ENCODE measurements at regions of chr11 and their contacts with region 1.

Region 1: DNA sequence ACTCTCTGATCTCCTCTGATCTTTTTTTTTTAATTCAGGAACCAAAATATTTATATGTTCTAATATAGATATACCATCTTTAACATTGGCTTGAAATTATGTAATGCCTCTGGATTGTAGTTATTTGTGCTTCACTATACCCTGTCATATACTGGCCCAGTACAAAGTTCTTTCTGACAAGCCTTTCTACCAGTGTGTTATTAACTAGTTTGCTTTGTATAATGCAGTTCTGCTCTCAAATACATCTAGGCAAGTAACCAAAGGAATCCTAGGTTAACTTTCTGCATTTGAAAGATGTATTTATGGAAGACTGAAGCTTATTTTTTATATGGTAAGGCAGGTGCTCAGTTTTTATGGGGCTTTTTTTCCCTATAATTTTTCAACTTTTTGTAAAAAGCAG is 36.1 kb downstream of the ARHGEF12 start:
- DNase-seq: no peak
- ATAC-seq: no peak
- H3K4me3 ChIP-seq: no peak overlapping the region
- H3K27ac ChIP-seq: no peak overlapping the region
- H3K4me1 ChIP-seq: peaks cover 48% of the 10 kb centered on the region
- H3K27me3 ChIP-seq: no peaks in the 10 kb centered on the region
- CTCF ChIP-seq: no peak

Region 2: DNA sequence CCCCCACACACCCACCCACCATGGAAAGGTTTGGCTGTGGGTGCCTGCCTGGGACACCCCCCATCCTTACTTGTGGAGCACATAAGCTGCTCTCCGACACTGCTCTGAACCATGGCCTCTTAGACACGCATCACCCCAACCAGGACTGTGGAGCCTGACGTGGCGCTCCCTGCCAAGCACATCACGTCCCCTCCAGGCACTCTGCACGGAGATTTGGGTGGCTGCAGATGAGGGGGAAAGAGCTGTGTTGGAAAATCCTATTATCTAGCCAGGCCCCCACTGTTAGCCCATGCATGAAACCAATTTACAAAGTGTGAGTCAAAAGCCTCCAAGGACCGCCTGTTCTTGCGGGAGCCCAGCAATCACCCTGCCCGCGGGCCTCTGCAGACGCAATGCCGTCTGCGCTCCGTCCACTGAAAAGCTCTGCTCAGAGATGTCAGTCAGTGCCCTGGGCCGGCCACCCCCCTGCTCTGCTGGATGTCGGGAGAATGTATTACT is 479.9 kb before region 1 on chr11:
- intact Hi-C with region 1: no loop called
- DNase-seq: no peak
- ATAC-seq: peak in 2 of 4 donors; percentile 17 to 42
- H3K4me3 ChIP-seq: no peak overlapping the region
- H3K27ac ChIP-seq: no peak overlapping the region
- H3K4me1 ChIP-seq: no peaks in the 10 kb centered on the region
- H3K27me3 ChIP-seq: peaks cover 0 to 11% (median 6%) of the 10 kb centered on the region in 3 donors
- CTCF ChIP-seq: no peak

Region 3: DNA sequence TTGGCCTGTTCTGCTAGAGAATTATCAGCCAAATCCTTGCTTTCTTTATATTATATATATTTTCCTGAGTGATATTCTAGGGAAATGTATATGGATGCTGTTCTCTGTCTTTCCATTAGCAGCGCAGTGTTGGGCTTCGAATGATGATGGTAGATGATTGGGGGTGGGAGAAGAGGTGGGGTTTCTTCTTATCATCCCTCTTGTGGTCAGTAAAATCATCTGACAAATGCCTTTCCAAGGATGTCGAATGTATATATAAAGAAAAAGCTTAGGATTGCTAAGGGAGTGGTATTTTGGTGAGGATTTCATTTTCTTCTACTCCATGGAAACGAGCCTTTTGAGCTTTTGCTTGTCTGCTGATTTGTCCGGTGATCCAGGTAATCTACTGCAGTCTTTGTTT is 12.8 kb after region 1 on chr11:
- intact Hi-C with region 1: loop called in 1 of 2 experiments (anchors 1 kb)
- DNase-seq: no peak
- ATAC-seq: no peak
- H3K4me3 ChIP-seq: no peak overlapping the region
- H3K27ac ChIP-seq: no peak overlapping the region
- H3K4me1 ChIP-seq: peaks cover 74% of the 10 kb centered on the region
- H3K27me3 ChIP-seq: no peaks in the 10 kb centered on the region
- CTCF ChIP-seq: no peak

Region 4: GRCh38 chr11:120413480-120413879 is 41.2 kb after region 1 on chr11:
- intact Hi-C with region 1: no loop called
- DNase-seq: no peak
- ATAC-seq: peak in 2 of 4 donors; percentile 43 to 45
- H3K4me3 ChIP-seq: no peak overlapping the region
- H3K27ac ChIP-seq: no peak overlapping the region
- H3K4me1 ChIP-seq: peaks cover 12% of the 10 kb centered on the region
- H3K27me3 ChIP-seq: no peaks in the 10 kb centered on the region
- CTCF ChIP-seq: no peak

Region 5: DNA sequence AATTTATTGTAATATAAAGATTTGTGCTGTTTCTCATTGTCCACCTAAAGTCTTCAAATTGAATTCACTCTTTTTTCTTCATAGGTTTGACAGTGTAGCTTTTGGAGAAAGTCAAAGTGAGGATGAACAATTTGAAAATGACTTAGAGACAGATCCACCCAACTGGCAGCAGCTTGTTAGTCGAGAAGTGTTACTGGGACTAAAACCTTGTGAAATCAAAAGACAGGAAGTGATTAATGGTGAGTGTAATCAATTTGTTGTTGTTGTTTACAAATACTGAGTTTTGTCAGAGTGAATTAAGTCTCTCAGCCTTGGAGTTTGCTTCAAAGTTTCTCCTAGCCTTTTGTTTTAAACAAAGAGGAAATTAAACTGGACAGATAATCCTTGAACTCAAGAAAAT is 85.7 kb after region 1 on chr11:
- intact Hi-C with region 1: no loop called
- DNase-seq: no peak
- ATAC-seq: no peak
- H3K4me3 ChIP-seq: no peak overlapping the region
- H3K27ac ChIP-seq: no peak overlapping the region
- H3K4me1 ChIP-seq: no peaks in the 10 kb centered on the region
- H3K27me3 ChIP-seq: no peaks in the 10 kb centered on the region
- CTCF ChIP-seq: no peak